CD4-positive, alpha-beta T cell (primary cell): ENCODE measurements at regions of chr16 and their contacts with region 1.

Region 1: DNA sequence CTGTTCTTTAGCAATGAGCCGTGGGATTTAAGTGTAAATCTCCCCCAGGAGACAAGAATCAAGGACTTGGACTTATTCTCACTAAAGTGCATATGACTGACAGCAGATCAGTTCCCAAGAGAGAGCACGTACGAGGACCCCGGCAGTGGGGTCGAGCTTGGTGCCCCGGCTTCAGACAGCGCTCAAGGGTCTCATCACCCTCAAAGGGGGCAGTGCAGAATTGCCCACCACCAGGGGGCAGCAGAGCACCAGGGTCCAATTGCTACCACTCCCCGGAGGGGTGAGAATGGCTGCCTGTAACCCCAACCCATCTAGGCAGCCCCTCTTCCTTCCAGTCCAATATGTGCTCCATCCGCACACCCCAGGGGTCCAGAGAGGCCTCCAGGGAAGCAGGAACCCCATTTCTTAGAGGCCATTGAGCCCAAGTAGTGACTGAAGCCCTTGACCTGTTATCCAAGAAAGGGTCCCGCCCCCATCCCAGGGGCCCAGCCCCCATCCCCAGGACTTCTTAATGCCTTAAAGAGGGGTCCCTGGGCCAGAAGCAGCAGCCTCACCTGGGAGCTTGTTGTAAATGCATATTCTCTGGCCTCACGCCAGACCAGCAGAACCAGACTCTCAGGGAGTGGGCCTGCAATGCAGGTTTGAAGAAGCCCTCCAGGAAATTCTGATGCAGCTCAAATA is 86.1 kb downstream of the ZDHHC7 start:
- DNase-seq: peak; percentile 54 to 82 (median 62)
- ATAC-seq: peak; percentile 60
- H3K4me3 ChIP-seq: no peak overlapping the region
- H3K4me3 Mint-ChIP-seq: no peak overlapping the region
- H3K27ac ChIP-seq: no peak overlapping the region
- H3K27ac Mint-ChIP-seq: no peak overlapping the region
- H3K4me1 ChIP-seq: peaks cover 3% of the 10 kb centered on the region
- H3K4me1 Mint-ChIP-seq: no peaks in the 10 kb centered on the region
- H3K27me3 ChIP-seq: no peaks in the 10 kb centered on the region
- H3K27me3 Mint-ChIP-seq: peaks cover 5% of the 10 kb centered on the region
- CTCF ChIP-seq: peak; percentile 92

Region 2: DNA sequence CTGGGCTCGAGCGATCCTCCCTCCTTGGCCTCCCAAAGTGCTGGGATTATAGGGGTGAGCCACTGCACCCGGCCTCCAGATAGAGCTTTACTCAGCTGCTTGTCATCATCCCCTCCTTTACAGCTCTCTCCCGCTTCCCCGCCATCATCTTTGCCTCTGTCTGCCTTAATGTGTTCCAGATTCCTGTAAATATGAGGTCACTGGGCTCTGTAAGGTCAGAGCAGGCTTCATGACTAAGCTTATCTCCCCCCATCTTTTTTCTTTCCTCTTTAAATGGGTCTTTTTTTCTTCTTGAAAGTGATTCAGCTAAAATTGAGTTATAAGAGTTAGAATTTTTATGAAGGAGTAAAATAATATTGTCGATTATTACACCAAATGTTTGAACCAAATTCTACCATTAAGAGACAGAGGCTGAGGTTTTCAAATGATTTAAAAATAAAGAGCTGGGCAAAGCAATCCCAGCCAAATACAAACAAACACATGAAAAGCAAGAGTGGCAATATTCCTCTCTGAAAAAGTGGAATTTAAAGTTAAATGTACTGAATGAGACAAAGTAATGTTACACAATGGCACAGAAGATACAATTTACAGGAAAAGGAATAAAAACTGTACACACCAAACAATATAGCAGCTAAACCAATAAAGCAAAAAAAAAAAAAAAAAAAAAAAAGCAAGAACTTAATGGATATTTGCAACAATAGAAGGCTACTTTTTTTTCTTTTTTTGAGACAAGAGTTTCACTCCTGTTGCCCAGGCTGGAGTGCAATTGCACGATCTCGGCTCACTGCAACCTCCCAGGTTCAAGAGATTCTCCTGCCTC is 43.3 kb before region 1 on chr16:
- CTCF ChIA-PET with region 1: no interaction called
- POLR2A ChIA-PET with region 1: no interaction called
- intact Hi-C with region 1: no loop called
- DNase-seq: no peak
- ATAC-seq: no peak
- H3K4me3 ChIP-seq: no peak overlapping the region
- H3K4me3 Mint-ChIP-seq: no peak overlapping the region
- H3K27ac ChIP-seq: no peak overlapping the region
- H3K27ac Mint-ChIP-seq: no peak overlapping the region
- H3K4me1 ChIP-seq: no peaks in the 10 kb centered on the region
- H3K4me1 Mint-ChIP-seq: no peaks in the 10 kb centered on the region
- H3K27me3 ChIP-seq: no peaks in the 10 kb centered on the region
- H3K27me3 Mint-ChIP-seq: peaks cover 8% of the 10 kb centered on the region
- CTCF ChIP-seq: no peak

Region 3: DNA sequence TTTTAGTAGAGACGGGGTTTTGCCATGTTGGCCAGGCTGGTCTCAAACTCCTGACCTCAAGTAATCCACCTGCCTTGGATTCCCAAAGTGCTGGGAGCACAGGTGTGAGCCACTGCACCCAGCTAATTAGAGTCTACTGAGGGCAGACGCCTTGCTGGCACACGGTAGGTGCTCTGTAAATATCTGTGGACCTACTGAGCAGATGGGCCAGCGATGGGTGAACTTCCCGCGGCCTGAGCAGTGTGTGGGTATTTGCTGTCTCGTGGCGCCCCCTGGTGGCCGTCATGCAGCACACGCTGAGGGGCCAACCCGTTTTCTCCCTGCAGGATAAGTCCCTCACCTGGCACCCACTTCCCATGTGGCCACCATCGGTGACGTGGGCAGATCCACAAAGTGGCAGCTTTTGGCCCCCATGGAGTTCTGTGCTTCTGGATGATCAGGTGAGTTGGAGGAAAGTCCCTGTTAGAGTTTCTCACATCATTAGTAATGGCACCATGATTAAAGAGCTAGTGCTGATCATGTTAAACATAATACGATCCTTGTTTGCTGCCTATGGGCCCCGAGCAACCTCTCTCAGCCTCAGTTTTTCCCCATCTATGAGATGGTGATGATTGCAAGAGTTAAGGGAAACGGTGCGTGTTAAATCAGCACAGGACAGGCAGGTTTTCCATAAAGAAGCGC is 45.4 kb after region 1 on chr16:
- CTCF ChIA-PET with region 1: no interaction called
- POLR2A ChIA-PET with region 1: no interaction called
- intact Hi-C with region 1: loop called (anchors 1 kb)
- DNase-seq: peak; percentile 66 to 91 (median 74)
- ATAC-seq: peak; percentile 99
- H3K4me3 ChIP-seq: no peak overlapping the region
- H3K4me3 Mint-ChIP-seq: no peak overlapping the region
- H3K27ac ChIP-seq: no peak overlapping the region
- H3K27ac Mint-ChIP-seq: no peak overlapping the region
- H3K4me1 ChIP-seq: peaks cover 9% of the 10 kb centered on the region
- H3K4me1 Mint-ChIP-seq: peaks cover 6% of the 10 kb centered on the region
- H3K27me3 ChIP-seq: no peaks in the 10 kb centered on the region
- H3K27me3 Mint-ChIP-seq: no peaks in the 10 kb centered on the region
- CTCF ChIP-seq: peak; percentile 91